ENCODE measurements at regions of chr19 and their contacts with region 1.

Region 1: GRCh38 chr19:38831142-38831605 is 420 bp downstream of the ECH1 start:
- DNase-seq: peak in 1 of 9 experiments; percentile 63
- ATAC-seq: no peak
- H3K4me3 ChIP-seq: peak overlapping the region; percentile 74
- H3K4me3 Mint-ChIP-seq: peak overlapping the region; percentile 90
- H3K27ac ChIP-seq: peak overlapping the region; percentile 66 to 85
- H3K27ac Mint-ChIP-seq: peak overlapping the region; percentile 89
- H3K4me1 ChIP-seq: peaks cover 21% of the 10 kb centered on the region
- H3K4me1 Mint-ChIP-seq: peaks cover 37% of the 10 kb centered on the region
- H3K27me3 ChIP-seq: no peaks in the 10 kb centered on the region
- H3K27me3 Mint-ChIP-seq: no peaks in the 10 kb centered on the region
- CTCF ChIP-seq: no peak

Region 2: GRCh38 chr19:38729653-38730469 is 101.3 kb before region 1 on chr19:
- CTCF ChIA-PET with region 1: no interaction called
- POLR2A ChIA-PET with region 1: interaction called, 5 read pairs
- intact Hi-C with region 1: loop called in 1 of 2 experiments (anchors 5 kb)
- DNase-seq: peak; percentile 47 to 86 (median 79)
- ATAC-seq: peak; percentile 62
- H3K4me3 ChIP-seq: no peak overlapping the region
- H3K4me3 Mint-ChIP-seq: no peak overlapping the region
- H3K27ac ChIP-seq: no peak overlapping the region
- H3K27ac Mint-ChIP-seq: no peak overlapping the region
- H3K4me1 ChIP-seq: peaks cover 17% of the 10 kb centered on the region
- H3K4me1 Mint-ChIP-seq: peaks cover 32% of the 10 kb centered on the region
- H3K27me3 ChIP-seq: no peaks in the 10 kb centered on the region
- H3K27me3 Mint-ChIP-seq: no peaks in the 10 kb centered on the region
- CTCF ChIP-seq: peak; percentile 75

Region 3: GRCh38 chr19:38842439-38843174 is 11.4 kb after region 1 on chr19:
- CTCF ChIA-PET with region 1: interaction called, 9 read pairs
- POLR2A ChIA-PET with region 1: interaction called, 38 read pairs
- intact Hi-C with region 1: loop called in 1 of 2 experiments (anchors 1 kb)
- DNase-seq: peak; percentile 38 to 88 (median 72)
- ATAC-seq: peak; percentile 79
- H3K4me3 ChIP-seq: peak overlapping the region in 1 of 2 experiments; percentile 34
- H3K4me3 Mint-ChIP-seq: peak overlapping the region; percentile 72
- H3K27ac ChIP-seq: peak overlapping the region; percentile 46 to 56
- H3K27ac Mint-ChIP-seq: peak overlapping the region; percentile 89
- H3K4me1 ChIP-seq: peaks cover 80% of the 10 kb centered on the region
- H3K4me1 Mint-ChIP-seq: peaks cover 76% of the 10 kb centered on the region
- H3K27me3 ChIP-seq: no peaks in the 10 kb centered on the region
- H3K27me3 Mint-ChIP-seq: no peaks in the 10 kb centered on the region
- CTCF ChIP-seq: no peak

Region 4: GRCh38 chr19:38877781-38878574 is 46.8 kb after region 1 on chr19 and contains the start of gene RINL:
- CTCF ChIA-PET with region 1: interaction called, 3 read pairs
- POLR2A ChIA-PET with region 1: interaction called, 10 read pairs
- intact Hi-C with region 1: no loop called
- DNase-seq: peak in 8 of 9 experiments; percentile 63 to 85 (median 76)
- ATAC-seq: peak; percentile 94
- H3K4me3 ChIP-seq: peak within 1 kb of the TSS; percentile 52 to 65
- H3K4me3 Mint-ChIP-seq: peak within 1 kb of the TSS; percentile 87
- H3K27ac ChIP-seq: peak within 1 kb of the TSS; percentile 79 to 95
- H3K27ac Mint-ChIP-seq: peak within 1 kb of the TSS; percentile 97
- H3K4me1 ChIP-seq: peaks cover 36% of the 10 kb centered on the region
- H3K4me1 Mint-ChIP-seq: peaks cover 37% of the 10 kb centered on the region
- H3K27me3 ChIP-seq: no peaks in the 10 kb centered on the region
- H3K27me3 Mint-ChIP-seq: no peaks in the 10 kb centered on the region
- CTCF ChIP-seq: no peak
- total RNA-seq, gene RINL: 18.1 to 18.4 TPM

Region 5: GRCh38 chr19:38974624-38975213 is 143.5 kb after region 1 on chr19:
- CTCF ChIA-PET with region 1: no interaction called
- POLR2A ChIA-PET with region 1: no interaction called
- intact Hi-C with region 1: no loop called
- DNase-seq: no peak
- ATAC-seq: no peak
- H3K4me3 ChIP-seq: no peak overlapping the region
- H3K4me3 Mint-ChIP-seq: peak overlapping the region; percentile 37
- H3K27ac ChIP-seq: no peak overlapping the region
- H3K27ac Mint-ChIP-seq: no peak overlapping the region
- H3K4me1 ChIP-seq: peaks cover 4% of the 10 kb centered on the region
- H3K4me1 Mint-ChIP-seq: peaks cover 8% of the 10 kb centered on the region
- H3K27me3 ChIP-seq: peaks cover 8 to 12% of the 10 kb centered on the region in 2 experiments
- H3K27me3 Mint-ChIP-seq: peaks cover 31% of the 10 kb centered on the region
- CTCF ChIP-seq: no peak

Measured in CD8-positive, alpha-beta T cell (primary cell).